GM10248 (cell line): ENCODE measurements at regions of chr17 and their contacts with region 1.

Region 1: GRCh38 chr17:29777663-29778062 is 152.4 kb downstream of the SSH2 start:
- DNase-seq: no peak
- CTCF ChIP-seq: no peak

Region 2: DNA sequence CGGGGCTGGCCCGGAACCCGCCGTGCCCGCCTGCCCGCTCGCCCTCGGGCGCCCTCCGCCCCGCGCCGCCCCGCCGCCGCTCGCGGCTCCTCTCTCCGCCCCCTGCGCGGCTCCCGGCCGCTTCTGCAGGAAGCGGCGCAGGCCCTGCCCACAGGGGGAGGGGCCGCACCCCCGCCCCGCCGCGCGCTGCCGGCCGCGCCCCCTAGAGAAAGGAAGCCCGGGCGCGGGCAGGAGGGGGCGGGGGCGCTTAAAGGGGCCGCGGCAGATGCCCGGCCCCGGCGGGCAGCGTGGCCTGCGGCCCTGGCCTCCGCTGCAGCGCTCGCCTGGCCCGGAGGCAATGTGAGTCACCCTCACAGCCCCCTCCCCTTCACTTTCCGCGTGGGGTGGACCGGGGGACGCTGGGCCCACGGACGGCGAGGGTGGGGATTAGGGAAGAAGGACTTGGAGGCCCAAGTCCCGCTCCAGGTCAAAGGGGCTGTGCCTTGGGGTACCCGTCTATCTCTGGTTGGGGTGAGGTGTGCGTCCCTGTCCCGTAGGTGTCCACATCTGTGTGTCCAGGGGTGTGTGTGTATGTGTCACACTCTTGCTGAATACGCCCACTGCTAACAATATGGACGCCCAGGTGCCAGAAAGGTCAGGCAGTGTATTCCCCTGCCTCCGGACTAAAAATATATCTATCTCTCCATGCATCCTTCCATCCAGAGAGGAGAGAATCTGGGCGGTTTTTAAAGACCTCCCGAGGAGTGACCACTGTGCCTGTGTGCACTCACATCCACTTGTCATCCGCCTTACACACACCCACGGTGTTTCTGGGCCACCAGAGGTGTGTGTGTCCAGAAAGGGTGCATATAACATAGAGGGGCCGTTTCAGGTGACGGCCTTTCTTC is 187.9 kb before region 1 on chr17 and contains the start of gene GIT1:
- CTCF ChIA-PET with region 1: interaction called, 12 read pairs
- POLR2A ChIA-PET with region 1: no interaction called
- DNase-seq: peak; percentile 95
- CTCF ChIP-seq: no peak

Region 3: GRCh38 chr17:29645515-29646051 is 132.1 kb before region 1 on chr17:
- CTCF ChIA-PET with region 1: interaction called, 20 read pairs
- POLR2A ChIA-PET with region 1: no interaction called
- DNase-seq: no peak
- CTCF ChIP-seq: no peak

Region 4: DNA sequence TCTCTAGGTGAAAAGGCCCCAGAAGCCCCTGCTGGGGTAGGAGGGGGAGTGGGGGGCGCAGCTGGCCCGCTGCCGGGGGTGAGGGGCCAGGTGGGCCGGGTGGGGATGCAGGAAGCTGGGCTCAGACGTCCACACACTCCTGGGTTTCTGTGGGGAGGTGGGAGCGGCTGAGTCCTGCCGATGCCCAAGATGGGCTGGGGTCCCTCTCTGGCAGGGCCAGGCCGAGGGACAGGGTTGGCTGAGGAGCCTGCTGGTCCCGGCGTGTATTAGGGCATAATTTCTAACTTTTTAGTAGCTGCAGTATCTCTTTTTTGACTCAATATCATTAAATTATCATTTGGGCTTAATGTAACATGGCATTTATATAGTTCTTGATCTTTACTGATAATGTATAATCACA is 33.5 kb before region 1 on chr17:
- CTCF ChIA-PET with region 1: interaction called, 11 read pairs
- POLR2A ChIA-PET with region 1: no interaction called
- DNase-seq: no peak
- CTCF ChIP-seq: no peak

Region 5: GRCh38 chr17:29789196-29790170 is 11.8 kb after region 1 on chr17:
- CTCF ChIA-PET with region 1: interaction called, 19 read pairs
- POLR2A ChIA-PET with region 1: no interaction called
- DNase-seq: no peak
- CTCF ChIP-seq: no peak

Region 6: GRCh38 chr17:30200106-30200505 is 422.4 kb after region 1 on chr17:
- CTCF ChIA-PET with region 1: no interaction called
- POLR2A ChIA-PET with region 1: no interaction called
- DNase-seq: no peak
- CTCF ChIP-seq: no peak